Activated naive CD4-positive, alpha-beta T cell treated with anti-CD3 and anti-CD28 coated beads for 36 hours (primary cell): ENCODE measurements at regions of chr20 and their contacts with region 1.

Region 1: DNA sequence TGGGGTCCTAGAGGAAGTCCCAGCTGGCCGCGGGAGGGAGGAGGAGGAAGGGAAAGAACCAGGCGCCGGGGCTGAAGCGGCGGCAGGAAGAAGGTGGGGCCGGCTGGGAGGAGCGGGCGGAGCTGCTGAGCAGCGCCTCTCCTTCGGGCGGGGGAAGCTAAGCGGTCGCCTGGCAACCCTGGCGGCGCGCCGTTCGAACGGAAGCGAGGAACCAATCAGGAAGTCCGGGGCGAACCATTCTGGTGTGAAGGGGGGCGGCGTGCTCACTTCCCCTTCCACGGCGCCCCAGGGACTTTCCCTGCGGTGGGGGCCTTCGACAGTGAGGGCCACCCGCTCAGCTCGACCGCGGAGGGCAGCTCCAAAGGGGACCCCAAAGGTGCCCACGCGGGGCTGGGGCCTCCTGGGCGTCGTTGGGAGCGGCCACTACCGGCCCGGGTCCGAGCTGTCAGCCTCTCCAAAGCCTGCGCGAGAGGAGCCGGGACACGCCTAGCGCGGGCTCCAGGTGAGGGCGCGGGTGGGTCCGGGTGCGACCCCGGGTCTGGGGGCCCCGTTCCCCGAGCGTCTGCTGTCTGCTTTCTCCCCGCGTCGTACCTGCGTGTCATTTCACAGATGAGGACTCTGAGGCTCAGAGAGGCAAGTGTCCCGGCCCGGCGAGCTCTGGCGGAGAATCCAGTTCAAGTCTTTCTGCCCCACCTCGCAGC is at the start of gene FAM110A:
- DNase-seq: peak; percentile 97
- H3K4me3 Mint-ChIP-seq: peak within 1 kb of the TSS; percentile 92
- H3K27ac Mint-ChIP-seq: peak within 1 kb of the TSS; percentile 73
- H3K4me1 Mint-ChIP-seq: peaks cover 37% of the 10 kb centered on the region
- H3K27me3 Mint-ChIP-seq: no peaks in the 10 kb centered on the region
- total RNA-seq, gene FAM110A: 15.4 to 16.2 TPM

Region 2: DNA sequence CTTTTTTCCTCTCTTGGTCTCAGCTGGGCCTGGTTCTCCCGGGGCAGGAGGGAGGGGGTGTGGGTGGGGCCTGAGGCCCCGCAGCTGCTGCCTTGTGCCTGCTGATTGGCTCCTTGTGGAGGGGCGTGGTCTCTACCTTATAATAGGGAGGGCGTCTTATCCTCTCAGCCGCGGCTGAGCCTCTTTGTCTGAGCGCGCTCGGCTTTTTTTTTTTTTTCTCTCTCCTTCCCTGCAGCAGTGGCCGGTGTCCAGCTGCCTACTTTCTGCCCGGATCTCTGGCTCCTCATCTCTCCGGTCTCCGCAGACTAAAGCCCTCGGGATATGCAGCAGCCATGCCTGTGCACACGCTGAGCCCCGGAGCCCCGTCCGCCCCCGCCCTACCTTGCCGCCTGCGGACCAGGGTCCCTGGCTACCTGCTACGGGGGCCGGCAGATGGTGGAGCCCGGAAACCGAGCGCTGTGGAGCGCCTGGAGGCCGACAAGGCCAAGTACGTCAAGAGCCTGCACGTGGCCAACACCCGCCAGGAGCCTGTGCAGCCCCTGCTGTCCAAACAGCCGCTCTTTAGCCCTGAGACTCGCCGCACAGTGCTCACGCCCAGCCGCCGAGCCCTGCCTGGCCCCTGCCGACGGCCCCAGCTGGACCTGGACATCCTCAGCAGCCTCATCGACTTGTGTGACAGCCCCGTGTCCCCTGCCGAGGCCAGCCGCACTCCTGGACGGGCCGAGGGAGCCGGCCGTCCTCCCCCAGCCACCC is 11.0 kb after region 1 on chr20:
- CTCF ChIA-PET with region 1: interaction called, 6 read pairs
- intact Hi-C with region 1: loop called (anchors 1 kb)
- DNase-seq: peak; percentile 95
- H3K4me3 Mint-ChIP-seq: peak overlapping the region; percentile 75
- H3K27ac Mint-ChIP-seq: peak overlapping the region; percentile 41
- H3K4me1 Mint-ChIP-seq: peaks cover 43% of the 10 kb centered on the region
- H3K27me3 Mint-ChIP-seq: no peaks in the 10 kb centered on the region

Region 3: GRCh38 chr20:884983-885952 is 51.7 kb after region 1 on chr20:
- CTCF ChIA-PET with region 1: interaction called, 4 read pairs
- intact Hi-C with region 1: loop called (anchors 2 kb)
- DNase-seq: peak; percentile 32
- H3K4me3 Mint-ChIP-seq: no peak overlapping the region
- H3K27ac Mint-ChIP-seq: no peak overlapping the region
- H3K4me1 Mint-ChIP-seq: peaks cover 13% of the 10 kb centered on the region
- H3K27me3 Mint-ChIP-seq: peaks cover 14% of the 10 kb centered on the region

Region 4: GRCh38 chr20:991850-992249 is 158.2 kb after region 1 on chr20:
- CTCF ChIA-PET with region 1: no interaction called
- intact Hi-C with region 1: no loop called
- DNase-seq: no peak
- H3K4me3 Mint-ChIP-seq: no peak overlapping the region
- H3K27ac Mint-ChIP-seq: no peak overlapping the region
- H3K4me1 Mint-ChIP-seq: no peaks in the 10 kb centered on the region
- H3K27me3 Mint-ChIP-seq: peaks cover 22% of the 10 kb centered on the region

Region 5: GRCh38 chr20:1212607-1213396 is 379.2 kb after region 1 on chr20:
- CTCF ChIA-PET with region 1: interaction called, 4 read pairs
- intact Hi-C with region 1: loop called (anchors 5 kb)
- DNase-seq: peak; percentile 88
- H3K4me3 Mint-ChIP-seq: no peak overlapping the region
- H3K27ac Mint-ChIP-seq: no peak overlapping the region
- H3K4me1 Mint-ChIP-seq: peaks cover 39% of the 10 kb centered on the region
- H3K27me3 Mint-ChIP-seq: no peaks in the 10 kb centered on the region